Caco-2 (cell line): ENCODE measurements at regions of chr15 and their contacts with region 1.

Region 1: GRCh38 chr15:45705510-45706473 is 71.0 kb downstream of the SQOR start:
- DNase-seq: peak; percentile 71 to 76
- H3K4me3 ChIP-seq: peak overlapping the region; percentile 47
- H3K4me3 Mint-ChIP-seq: peak overlapping the region; percentile 93
- H3K27ac Mint-ChIP-seq: peak overlapping the region; percentile 59
- H3K4me1 ChIP-seq: 0 out of 2 replicates have a peak, but pooled peaks cover 3% of the 10 kb centered on the region
- H3K4me1 Mint-ChIP-seq: peaks cover 7% of the 10 kb centered on the region
- H3K27me3 ChIP-seq: no peaks in the 10 kb centered on the region
- H3K27me3 Mint-ChIP-seq: no peaks in the 10 kb centered on the region
- CTCF ChIP-seq: peak; percentile 66 to 82

Region 2: GRCh38 chr15:45242289-45242688 is 463.5 kb before region 1 on chr15:
- CTCF ChIA-PET with region 1: no interaction called
- POLR2A ChIA-PET with region 1: no interaction called
- intact Hi-C with region 1: no loop called
- DNase-seq: peak in 1 of 2 experiments; percentile 38
- H3K4me3 ChIP-seq: no peak overlapping the region
- H3K4me3 Mint-ChIP-seq: no peak overlapping the region
- H3K27ac Mint-ChIP-seq: no peak overlapping the region
- H3K4me1 ChIP-seq: no peaks in the 10 kb centered on the region
- H3K4me1 Mint-ChIP-seq: no peaks in the 10 kb centered on the region
- H3K27me3 ChIP-seq: no peaks in the 10 kb centered on the region
- H3K27me3 Mint-ChIP-seq: no peaks in the 10 kb centered on the region
- CTCF ChIP-seq: no peak

Region 3: DNA sequence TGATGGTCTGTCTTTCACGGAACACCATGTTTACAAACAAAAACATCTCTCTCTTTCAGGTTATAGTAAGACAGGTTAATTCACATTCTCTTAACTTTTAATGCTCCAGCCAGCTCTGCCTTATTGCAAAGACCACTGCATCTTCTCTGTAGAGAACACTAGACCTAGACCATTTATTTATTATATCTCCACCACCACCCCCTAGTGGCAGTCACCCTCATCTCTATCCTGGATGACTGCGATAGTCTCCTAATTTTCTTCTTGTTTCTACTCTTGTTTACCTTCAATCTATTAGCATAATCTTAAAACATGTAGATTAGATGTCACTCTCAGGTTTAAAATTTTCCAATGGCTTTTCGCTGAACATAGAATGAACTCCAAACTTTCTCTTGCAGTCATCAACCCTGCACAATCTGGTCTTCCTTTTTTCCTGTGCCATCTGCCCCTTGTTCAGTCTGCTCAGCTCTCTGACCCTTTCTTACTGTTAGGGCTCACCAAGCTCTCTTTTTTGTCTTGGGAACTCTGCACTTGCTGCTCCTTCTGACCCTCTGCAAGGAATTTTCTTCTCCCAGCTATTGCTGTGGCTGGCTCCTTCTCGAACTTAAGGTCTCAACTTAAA is 84.6 kb after region 1 on chr15:
- CTCF ChIA-PET with region 1: interaction called, 10 read pairs
- POLR2A ChIA-PET with region 1: no interaction called
- intact Hi-C with region 1: loop called (anchors 1 kb)
- DNase-seq: peak in 1 of 2 experiments; percentile 53
- H3K4me3 ChIP-seq: no peak overlapping the region
- H3K4me3 Mint-ChIP-seq: no peak overlapping the region
- H3K27ac Mint-ChIP-seq: no peak overlapping the region
- H3K4me1 ChIP-seq: peaks cover 13% of the 10 kb centered on the region
- H3K4me1 Mint-ChIP-seq: no peaks in the 10 kb centered on the region
- H3K27me3 ChIP-seq: no peaks in the 10 kb centered on the region
- H3K27me3 Mint-ChIP-seq: no peaks in the 10 kb centered on the region
- CTCF ChIP-seq: peak; percentile 41 to 44

Region 4: DNA sequence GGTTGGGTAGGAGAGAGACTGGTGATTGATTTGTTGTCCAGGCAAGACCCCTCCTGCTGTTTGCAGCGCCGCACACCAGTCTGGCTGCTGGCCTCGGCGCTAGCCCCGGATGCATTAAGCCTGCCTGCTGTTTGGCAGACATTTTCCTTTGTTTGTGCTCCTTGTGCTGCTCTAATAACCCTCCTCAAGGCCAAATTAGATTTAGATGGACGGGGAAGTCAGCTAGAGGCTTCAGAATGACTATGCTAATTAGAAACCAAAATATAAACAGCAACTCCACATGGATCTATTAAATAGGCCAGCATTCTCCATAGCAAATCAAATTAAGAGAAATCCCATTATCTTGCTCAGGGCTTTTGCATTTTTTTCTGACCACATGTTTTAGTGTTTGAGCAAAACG is 374.2 kb after region 1 on chr15:
- CTCF ChIA-PET with region 1: interaction called, 5 read pairs
- POLR2A ChIA-PET with region 1: no interaction called
- intact Hi-C with region 1: loop called (anchors 1 kb)
- DNase-seq: no peak
- H3K4me3 ChIP-seq: no peak overlapping the region
- H3K4me3 Mint-ChIP-seq: no peak overlapping the region
- H3K27ac Mint-ChIP-seq: no peak overlapping the region
- H3K4me1 ChIP-seq: no peaks in the 10 kb centered on the region
- H3K4me1 Mint-ChIP-seq: no peaks in the 10 kb centered on the region
- H3K27me3 ChIP-seq: no peaks in the 10 kb centered on the region
- H3K27me3 Mint-ChIP-seq: peaks cover 5% of the 10 kb centered on the region
- CTCF ChIP-seq: no peak

Region 5: DNA sequence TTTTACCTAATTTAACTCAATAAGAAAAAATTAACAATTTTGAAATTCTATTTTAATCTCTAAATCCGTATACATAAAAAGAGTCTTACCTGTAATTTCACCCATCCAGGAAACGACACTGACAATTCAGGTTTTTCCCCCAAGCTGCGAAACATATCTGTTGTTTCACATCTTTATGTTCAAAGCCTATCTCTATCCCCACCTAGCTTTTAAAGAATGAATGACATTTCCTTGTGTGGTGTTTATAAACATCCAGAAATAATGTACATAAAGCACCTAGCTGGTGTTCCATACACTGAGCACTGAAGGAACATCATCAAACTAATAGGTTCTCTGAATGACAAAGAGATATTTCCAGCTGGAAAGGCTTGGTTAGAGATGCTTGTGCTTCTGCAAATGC is 796.9 kb after region 1 on chr15:
- CTCF ChIA-PET with region 1: no interaction called
- POLR2A ChIA-PET with region 1: no interaction called
- intact Hi-C with region 1: loop called (anchors 5 kb)
- DNase-seq: peak in 1 of 2 experiments; percentile 2
- H3K4me3 ChIP-seq: no peak overlapping the region
- H3K4me3 Mint-ChIP-seq: no peak overlapping the region
- H3K27ac Mint-ChIP-seq: no peak overlapping the region
- H3K4me1 ChIP-seq: no peaks in the 10 kb centered on the region
- H3K4me1 Mint-ChIP-seq: no peaks in the 10 kb centered on the region
- H3K27me3 ChIP-seq: no peaks in the 10 kb centered on the region
- H3K27me3 Mint-ChIP-seq: no peaks in the 10 kb centered on the region
- CTCF ChIP-seq: peak in 1 of 2 experiments; percentile 11